Right lobe of liver (tissue), 6 donors: ENCODE measurements at regions of chr22 and their contacts with region 1.

Region 1: GRCh38 chr22:41966607-41967240 is 2.5 kb upstream of the SEPTIN3 start:
- DNase-seq: no peak
- ATAC-seq: peak; percentile 70 to 91 (median 83)
- H3K4me3 ChIP-seq: no peak overlapping the region
- H3K27ac ChIP-seq: no peak overlapping the region
- H3K4me1 ChIP-seq: no peaks in the 10 kb centered on the region
- H3K27me3 ChIP-seq: no peaks in the 10 kb centered on the region
- CTCF ChIP-seq: peak; percentile 44 to 54 (median 48)
- POLR2A ChIP-seq: no peak

Region 2: DNA sequence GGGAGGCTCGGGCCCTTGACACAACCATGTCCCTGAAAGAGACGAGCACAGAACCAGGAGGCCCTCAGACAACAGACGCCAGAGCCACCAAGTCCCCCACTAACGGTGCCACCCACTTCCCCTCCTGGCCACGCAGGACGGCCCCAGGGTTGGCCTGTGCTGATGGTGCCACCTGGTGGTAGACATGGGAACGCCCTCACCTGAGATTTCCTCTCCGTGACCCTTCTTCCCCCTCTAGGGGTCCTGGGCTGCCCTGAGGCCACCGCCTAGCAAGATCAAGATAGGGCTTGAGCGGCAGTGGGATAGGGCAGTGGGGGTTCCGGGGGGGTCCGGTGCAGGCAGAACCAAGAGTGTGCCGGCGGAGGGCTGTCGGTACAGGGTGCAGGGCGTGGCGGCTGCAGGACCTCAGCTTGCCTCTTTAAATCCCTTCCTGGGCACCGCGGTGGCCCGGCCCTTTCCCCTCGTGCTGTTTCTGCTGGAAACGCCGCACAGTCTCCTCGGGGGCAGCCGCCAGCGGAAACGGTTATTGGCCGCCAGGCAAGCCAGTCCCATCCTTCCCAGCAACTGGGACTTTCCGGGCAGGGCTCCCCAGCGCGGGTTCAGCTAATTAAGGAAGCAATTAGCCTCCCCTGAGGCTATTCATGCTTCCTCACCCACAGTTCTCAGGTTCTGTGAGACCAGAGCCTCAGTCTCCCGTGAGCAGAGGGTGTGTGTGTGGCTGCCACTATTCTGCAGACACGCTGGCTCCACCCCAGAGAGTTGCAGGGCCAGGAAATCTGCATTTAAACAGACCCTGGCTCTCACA is 471.0 kb after region 1 on chr22:
- intact Hi-C with region 1: loop called in 1 of 2 experiments (anchors 10 kb)
- DNase-seq: peak; percentile 79 to 84 (median 79)
- ATAC-seq: peak; percentile 84 to 91 (median 88)
- H3K4me3 ChIP-seq: peak overlapping the region; percentile 32 to 50 (median 38)
- H3K27ac ChIP-seq: peak overlapping the region in 1 of 3 donors; percentile 38
- H3K4me1 ChIP-seq: peaks cover 0 to 9% (median 1%) of the 10 kb centered on the region in 4 donors
- H3K27me3 ChIP-seq: no peaks in the 10 kb centered on the region
- CTCF ChIP-seq: peak; percentile 92 to 97 (median 96)
- POLR2A ChIP-seq: no peak